Caco-2 (cell line): ENCODE measurements at regions of chr12 and their contacts with region 1.

Region 1: GRCh38 chr12:52865090-52865944 is 16.5 kb upstream of the KRT78 start:
- DNase-seq: peak; percentile 83 to 89
- H3K4me3 ChIP-seq: no peak overlapping the region
- H3K4me3 Mint-ChIP-seq: no peak overlapping the region
- H3K27ac Mint-ChIP-seq: no peak overlapping the region
- H3K4me1 ChIP-seq: peaks cover 1% of the 10 kb centered on the region; the same call in 1 of the 2 replicates
- H3K4me1 Mint-ChIP-seq: no peaks in the 10 kb centered on the region
- H3K27me3 ChIP-seq: no peaks in the 10 kb centered on the region
- H3K27me3 Mint-ChIP-seq: no peaks in the 10 kb centered on the region
- CTCF ChIP-seq: peak; percentile 89 to 93

Region 2: GRCh38 chr12:52582971-52583456 is 282.3 kb before region 1 on chr12:
- CTCF ChIA-PET with region 1: interaction called, 6 read pairs
- POLR2A ChIA-PET with region 1: no interaction called
- intact Hi-C with region 1: loop called (anchors 1 kb)
- DNase-seq: peak; percentile 60 to 74
- H3K4me3 ChIP-seq: no peak overlapping the region
- H3K4me3 Mint-ChIP-seq: no peak overlapping the region
- H3K27ac Mint-ChIP-seq: no peak overlapping the region
- H3K4me1 ChIP-seq: peaks cover 11% of the 10 kb centered on the region; the same call in 1 of the 2 replicates
- H3K4me1 Mint-ChIP-seq: no peaks in the 10 kb centered on the region
- H3K27me3 ChIP-seq: no peaks in the 10 kb centered on the region
- H3K27me3 Mint-ChIP-seq: peaks cover 4% of the 10 kb centered on the region
- CTCF ChIP-seq: peak; percentile 62 to 75

Region 3: DNA sequence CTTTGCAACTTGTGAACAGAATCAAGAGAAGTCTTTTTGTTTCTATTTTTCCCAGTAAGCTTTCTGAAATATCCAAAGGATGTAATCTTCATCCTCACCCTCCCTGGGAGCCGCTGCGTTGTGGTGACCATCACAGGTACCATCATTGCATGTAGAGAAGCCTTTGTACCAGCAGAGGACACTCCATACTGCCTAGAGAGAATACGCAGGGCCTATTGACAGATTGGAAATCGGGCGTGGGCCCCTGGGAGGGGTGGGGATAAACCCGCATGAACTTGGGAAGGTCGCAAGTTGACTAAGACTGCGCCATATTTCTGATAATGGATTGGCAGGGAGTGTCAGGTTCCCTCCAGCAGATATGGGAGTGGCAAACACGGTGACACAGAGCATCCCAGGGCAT is 197.8 kb before region 1 on chr12:
- CTCF ChIA-PET with region 1: interaction called, 4 read pairs
- POLR2A ChIA-PET with region 1: no interaction called
- intact Hi-C with region 1: loop called (anchors 2 kb)
- DNase-seq: peak in 1 of 2 experiments; percentile 17
- H3K4me3 ChIP-seq: no peak overlapping the region
- H3K4me3 Mint-ChIP-seq: no peak overlapping the region
- H3K27ac Mint-ChIP-seq: no peak overlapping the region
- H3K4me1 ChIP-seq: peaks cover 11% of the 10 kb centered on the region
- H3K4me1 Mint-ChIP-seq: no peaks in the 10 kb centered on the region
- H3K27me3 ChIP-seq: no peaks in the 10 kb centered on the region; the same call in 1 of the 2 replicates
- H3K27me3 Mint-ChIP-seq: peaks cover 16% of the 10 kb centered on the region
- CTCF ChIP-seq: peak in 1 of 2 experiments; percentile 29

Region 4: DNA sequence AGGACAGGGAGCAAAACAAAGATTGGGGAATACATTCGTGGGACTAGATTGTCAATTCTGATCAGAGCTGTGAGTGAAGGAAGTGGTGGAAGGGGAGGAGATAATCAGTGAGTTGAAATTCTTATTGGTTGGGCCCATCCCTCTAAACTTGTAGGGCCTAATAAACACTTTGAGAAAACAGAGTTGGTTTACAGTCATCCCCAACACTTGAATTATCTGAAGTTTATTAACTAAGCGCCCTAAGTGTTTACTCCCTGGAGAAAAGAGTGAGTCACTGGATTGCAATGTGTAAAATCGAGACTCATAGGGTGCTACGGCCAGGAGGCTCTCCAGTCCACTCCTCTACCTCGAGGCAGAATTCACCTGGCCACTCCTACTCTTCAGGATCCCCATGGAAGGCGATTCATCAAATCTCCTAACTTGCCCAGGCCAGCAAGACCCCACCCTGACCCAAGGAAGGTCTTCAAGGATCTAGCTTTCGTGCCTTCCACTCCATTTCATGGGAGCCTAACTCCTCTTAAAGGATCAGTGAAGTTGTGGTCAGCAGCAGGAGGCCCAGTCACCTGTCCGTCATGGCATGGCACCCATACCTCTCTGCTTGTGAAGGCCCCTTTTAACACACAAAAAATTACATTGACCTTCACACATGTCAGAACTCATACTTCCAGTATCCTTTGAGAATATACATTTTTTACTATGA is 66.1 kb before region 1 on chr12:
- CTCF ChIA-PET with region 1: no interaction called
- POLR2A ChIA-PET with region 1: no interaction called
- intact Hi-C with region 1: loop called (anchors 2 kb)
- DNase-seq: peak in 1 of 2 experiments; percentile 24
- H3K4me3 ChIP-seq: no peak overlapping the region
- H3K4me3 Mint-ChIP-seq: no peak overlapping the region
- H3K27ac Mint-ChIP-seq: peak overlapping the region; percentile 2
- H3K4me1 ChIP-seq: peaks cover 21% of the 10 kb centered on the region
- H3K4me1 Mint-ChIP-seq: peaks cover 28% of the 10 kb centered on the region
- H3K27me3 ChIP-seq: no peaks in the 10 kb centered on the region
- H3K27me3 Mint-ChIP-seq: no peaks in the 10 kb centered on the region
- CTCF ChIP-seq: no peak

Region 5: DNA sequence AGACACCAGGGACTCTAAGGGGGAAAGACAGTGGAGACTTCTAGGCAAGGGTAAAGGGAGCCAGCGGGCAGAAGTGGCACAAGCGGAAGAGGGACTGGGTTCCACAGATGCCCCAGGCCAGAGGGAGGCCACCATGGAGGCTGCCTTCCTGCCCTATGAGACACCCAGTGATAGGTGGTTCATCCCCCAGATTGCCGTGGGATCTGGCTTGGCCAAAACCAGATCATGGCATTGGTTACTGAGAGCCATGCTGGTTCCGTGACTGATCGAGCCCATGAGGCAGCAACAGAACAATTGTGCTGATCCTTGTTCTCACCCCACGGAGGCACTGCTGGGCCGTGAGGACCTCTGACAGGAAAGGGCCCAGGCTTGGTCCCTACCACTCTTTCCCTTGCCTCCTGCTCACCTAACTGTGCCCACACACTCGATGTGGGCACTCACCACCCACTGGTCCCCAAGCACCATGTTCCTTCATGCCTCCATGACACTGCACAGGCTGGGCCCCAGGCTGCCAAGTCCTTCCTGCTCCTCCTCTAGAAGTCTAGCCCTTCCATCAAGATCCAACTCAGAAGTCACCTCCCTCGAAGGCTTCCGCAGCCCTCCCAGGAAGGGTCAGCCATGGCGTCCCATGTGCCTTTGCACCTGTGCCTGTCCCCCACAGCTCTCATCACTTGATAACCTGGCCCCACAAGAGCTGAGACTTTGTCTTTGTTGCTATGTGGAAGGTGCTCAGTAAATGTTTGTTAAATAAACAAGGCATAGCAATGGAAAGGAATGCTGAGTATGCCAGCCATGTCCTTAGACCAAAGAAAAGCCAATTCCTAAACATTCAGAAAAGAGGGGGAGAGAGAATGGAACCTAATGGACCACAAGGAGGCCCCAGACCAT is 38.5 kb before region 1 on chr12:
- CTCF ChIA-PET with region 1: interaction called, 6 read pairs
- POLR2A ChIA-PET with region 1: no interaction called
- intact Hi-C with region 1: loop called (anchors 2 kb)
- DNase-seq: peak in 1 of 2 experiments; percentile 61
- H3K4me3 ChIP-seq: no peak overlapping the region
- H3K4me3 Mint-ChIP-seq: peak overlapping the region; percentile 39
- H3K27ac Mint-ChIP-seq: peak overlapping the region; percentile 99
- H3K4me1 ChIP-seq: peaks cover 29% of the 10 kb centered on the region
- H3K4me1 Mint-ChIP-seq: peaks cover 21% of the 10 kb centered on the region
- H3K27me3 ChIP-seq: no peaks in the 10 kb centered on the region
- H3K27me3 Mint-ChIP-seq: no peaks in the 10 kb centered on the region
- CTCF ChIP-seq: no peak